GM12878 (cell line): ENCODE measurements at regions of chr6 and their contacts with region 1.

Region 1: GRCh38 chr6:127302728-127303660 is 36.3 kb downstream of the RNF146 start:
- DNase-seq: no peak
- ATAC-seq: peak; percentile 86
- H3K4me3 ChIP-seq: no peak overlapping the region
- H3K27ac ChIP-seq: 0 out of 2 replicates have a peak overlapping the region, but pooled peaks have one; percentile 33
- H3K4me1 ChIP-seq: peaks cover 5% of the 10 kb centered on the region
- H3K27me3 ChIP-seq: no peaks in the 10 kb centered on the region
- CTCF ChIP-seq: peak; percentile 45 to 69 (median 67); a peak in 5 of 6 replicates
- EP300 ChIP-seq: no peak
- POLR2A ChIP-seq: no peak
- RAD21 ChIP-seq: peak; percentile 68

Region 2: DNA sequence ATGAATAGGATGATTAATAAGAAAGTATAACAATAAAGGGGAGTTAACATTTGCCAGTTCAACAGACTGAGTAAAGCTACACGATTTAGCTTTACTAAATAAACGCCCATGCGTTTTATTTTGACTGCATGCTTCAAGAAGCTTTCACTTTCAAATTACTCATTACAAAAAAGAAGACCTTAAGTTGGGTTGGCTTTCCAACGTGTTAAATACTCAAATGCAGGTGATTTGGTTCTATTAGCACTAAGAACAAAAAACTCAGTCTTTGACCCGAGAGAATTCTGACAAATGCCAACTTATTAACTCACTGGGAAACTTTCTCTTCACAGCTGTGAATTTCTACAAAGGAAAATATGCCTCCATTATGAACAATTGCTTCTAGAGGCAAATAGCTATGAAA is 11.5 kb before region 1 on chr6:
- CTCF ChIA-PET with region 1: interaction called, 15 read pairs
- POLR2A ChIA-PET with region 1: interaction called, 4 read pairs
- RAD21 ChIA-PET with region 1: interaction called, 17 read pairs
- SMC1A ChIA-PET with region 1: interaction called, 11 read pairs
- in situ Hi-C with region 1: no loop called
- intact Hi-C with region 1: no loop called
- DNase-seq: peak; percentile 39
- ATAC-seq: peak; percentile 95
- H3K4me3 ChIP-seq: no peak overlapping the region
- H3K27ac ChIP-seq: peak overlapping the region; percentile 15; the same call in 1 of the 2 replicates
- H3K4me1 ChIP-seq: peaks cover 13% of the 10 kb centered on the region; the same call in 1 of the 2 replicates
- H3K27me3 ChIP-seq: no peaks in the 10 kb centered on the region
- CTCF ChIP-seq: no peak
- EP300 ChIP-seq: peak in 1 of 2 experiments; percentile 50; a peak in 1 of 4 replicates
- POLR2A ChIP-seq: no peak
- RAD21 ChIP-seq: no peak

Region 3: DNA sequence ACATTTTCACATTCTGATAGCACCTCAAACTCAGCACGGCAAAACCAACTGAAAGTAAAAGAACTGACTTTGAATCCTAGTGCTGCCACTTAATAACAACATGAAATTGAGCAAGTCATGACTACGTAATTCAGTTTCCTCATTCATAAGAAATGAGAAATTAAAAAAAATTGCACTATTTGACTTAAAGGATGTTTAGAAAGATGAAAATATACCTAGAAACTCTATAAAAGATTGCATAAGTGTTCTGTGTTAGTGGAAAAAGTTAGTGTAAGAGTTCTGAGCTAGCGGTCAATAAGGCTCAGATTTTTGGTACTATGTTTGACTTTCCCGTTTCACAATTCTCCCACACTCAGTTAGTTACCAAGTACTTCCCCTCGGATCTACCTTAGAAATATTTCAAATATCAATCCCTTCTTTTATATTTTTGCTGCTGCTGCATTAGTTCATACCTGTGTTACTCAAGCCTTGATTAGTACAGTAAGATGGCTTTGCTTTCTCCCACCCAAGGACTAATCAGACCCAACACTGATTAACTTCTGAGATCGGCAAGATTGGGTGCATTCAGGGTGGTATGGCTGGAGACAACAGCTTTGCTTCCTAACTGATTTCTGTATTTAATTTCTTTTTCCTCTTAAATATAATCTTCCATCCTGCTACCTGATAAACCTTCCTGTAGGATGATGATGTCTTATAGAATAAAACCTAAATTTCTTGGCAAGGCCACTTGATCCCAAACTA is 14.6 kb after region 1 on chr6:
- CTCF ChIA-PET with region 1: interaction called, 23 read pairs
- POLR2A ChIA-PET with region 1: no interaction called
- RAD21 ChIA-PET with region 1: interaction called, 3 read pairs
- SMC1A ChIA-PET with region 1: interaction called, 12 read pairs
- in situ Hi-C with region 1: no loop called
- intact Hi-C with region 1: no loop called
- DNase-seq: no peak
- ATAC-seq: no peak
- H3K4me3 ChIP-seq: no peak overlapping the region
- H3K27ac ChIP-seq: no peak overlapping the region
- H3K4me1 ChIP-seq: no peaks in the 10 kb centered on the region
- H3K27me3 ChIP-seq: no peaks in the 10 kb centered on the region
- CTCF ChIP-seq: no peak
- EP300 ChIP-seq: no peak
- POLR2A ChIP-seq: no peak
- RAD21 ChIP-seq: no peak

Region 4: GRCh38 chr6:127342946-127343808 is 40.2 kb after region 1 on chr6 and contains the start of gene ECHDC1:
- CTCF ChIA-PET with region 1: interaction called, 11 read pairs
- POLR2A ChIA-PET with region 1: interaction called, 3 read pairs
- RAD21 ChIA-PET with region 1: interaction called, 9 read pairs
- SMC1A ChIA-PET with region 1: interaction called, 15 read pairs
- in situ Hi-C with region 1: no loop called
- intact Hi-C with region 1: no loop called
- DNase-seq: no peak
- ATAC-seq: peak; percentile 82
- H3K4me3 ChIP-seq: peak within 1 kb of the TSS; percentile 93
- H3K27ac ChIP-seq: peak within 1 kb of the TSS; percentile 98
- H3K4me1 ChIP-seq: peaks cover 10% of the 10 kb centered on the region
- H3K27me3 ChIP-seq: no peaks in the 10 kb centered on the region
- CTCF ChIP-seq: 0 out of 6 replicates have a peak, but pooled peaks of 1 of the 3 experiments have one; percentile 1
- EP300 ChIP-seq: no peak
- POLR2A ChIP-seq: peak; percentile 87
- RAD21 ChIP-seq: no peak
- polyA plus RNA-seq, gene ECHDC1: 71.6 to 85.4 TPM

Region 5: DNA sequence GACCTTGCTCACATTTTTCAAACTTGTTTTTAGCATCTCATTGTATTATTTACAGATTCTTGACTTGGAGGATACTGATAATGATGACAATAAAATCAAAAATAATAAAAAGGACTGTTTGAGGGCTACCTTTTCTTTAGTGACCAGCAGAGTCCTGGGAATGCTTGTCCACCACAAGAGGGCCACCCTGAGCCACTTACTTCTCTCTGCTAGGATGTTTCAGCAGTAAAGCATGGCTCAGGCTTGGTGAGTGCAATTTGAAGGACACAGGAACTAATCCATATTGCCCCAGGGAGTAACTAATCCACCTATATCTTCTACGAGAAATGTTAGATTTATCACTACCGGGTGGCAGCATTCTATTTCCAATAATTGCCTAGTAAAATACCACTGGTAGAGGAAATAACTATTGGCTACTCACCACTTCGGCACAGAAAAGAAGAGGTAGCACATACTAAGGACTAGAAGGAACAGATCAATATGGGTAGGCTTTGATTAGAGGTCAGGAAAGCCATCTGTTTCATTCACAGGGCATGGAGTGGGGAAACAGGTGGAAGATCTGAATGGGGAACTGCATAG is 162.0 kb after region 1 on chr6:
- CTCF ChIA-PET with region 1: interaction called, 12 read pairs
- POLR2A ChIA-PET with region 1: no interaction called
- RAD21 ChIA-PET with region 1: interaction called, 6 read pairs
- SMC1A ChIA-PET with region 1: interaction called, 9 read pairs
- in situ Hi-C with region 1: no loop called
- intact Hi-C with region 1: loop called (anchors 2 kb)
- DNase-seq: no peak
- ATAC-seq: peak; percentile 98
- H3K4me3 ChIP-seq: no peak overlapping the region
- H3K27ac ChIP-seq: no peak overlapping the region
- H3K4me1 ChIP-seq: no peaks in the 10 kb centered on the region
- H3K27me3 ChIP-seq: no peaks in the 10 kb centered on the region
- CTCF ChIP-seq: peak; percentile 81 to 88 (median 83)
- EP300 ChIP-seq: no peak
- POLR2A ChIP-seq: no peak
- RAD21 ChIP-seq: peak; percentile 88

Region 6: GRCh38 chr6:127539272-127539671 is 236.3 kb after region 1 on chr6:
- CTCF ChIA-PET with region 1: interaction called, 4 read pairs
- POLR2A ChIA-PET with region 1: no interaction called
- RAD21 ChIA-PET with region 1: interaction called, 11 read pairs
- SMC1A ChIA-PET with region 1: interaction called, 9 read pairs
- in situ Hi-C with region 1: loop called (anchors 10 kb)
- intact Hi-C with region 1: loop called (anchors 2 kb)
- DNase-seq: no peak
- ATAC-seq: peak; percentile 69
- H3K4me3 ChIP-seq: no peak overlapping the region
- H3K27ac ChIP-seq: no peak overlapping the region
- H3K4me1 ChIP-seq: no peaks in the 10 kb centered on the region
- H3K27me3 ChIP-seq: no peaks in the 10 kb centered on the region
- CTCF ChIP-seq: peak in 2 of 3 experiments; percentile 19 to 49; a peak in 2 of 6 replicates
- EP300 ChIP-seq: no peak
- POLR2A ChIP-seq: no peak
- RAD21 ChIP-seq: peak; percentile 53